Naive thymus-derived CD4-positive, alpha-beta T cell (primary cell): ENCODE measurements at regions of chrX and their contacts with region 1.

Region 1: DNA sequence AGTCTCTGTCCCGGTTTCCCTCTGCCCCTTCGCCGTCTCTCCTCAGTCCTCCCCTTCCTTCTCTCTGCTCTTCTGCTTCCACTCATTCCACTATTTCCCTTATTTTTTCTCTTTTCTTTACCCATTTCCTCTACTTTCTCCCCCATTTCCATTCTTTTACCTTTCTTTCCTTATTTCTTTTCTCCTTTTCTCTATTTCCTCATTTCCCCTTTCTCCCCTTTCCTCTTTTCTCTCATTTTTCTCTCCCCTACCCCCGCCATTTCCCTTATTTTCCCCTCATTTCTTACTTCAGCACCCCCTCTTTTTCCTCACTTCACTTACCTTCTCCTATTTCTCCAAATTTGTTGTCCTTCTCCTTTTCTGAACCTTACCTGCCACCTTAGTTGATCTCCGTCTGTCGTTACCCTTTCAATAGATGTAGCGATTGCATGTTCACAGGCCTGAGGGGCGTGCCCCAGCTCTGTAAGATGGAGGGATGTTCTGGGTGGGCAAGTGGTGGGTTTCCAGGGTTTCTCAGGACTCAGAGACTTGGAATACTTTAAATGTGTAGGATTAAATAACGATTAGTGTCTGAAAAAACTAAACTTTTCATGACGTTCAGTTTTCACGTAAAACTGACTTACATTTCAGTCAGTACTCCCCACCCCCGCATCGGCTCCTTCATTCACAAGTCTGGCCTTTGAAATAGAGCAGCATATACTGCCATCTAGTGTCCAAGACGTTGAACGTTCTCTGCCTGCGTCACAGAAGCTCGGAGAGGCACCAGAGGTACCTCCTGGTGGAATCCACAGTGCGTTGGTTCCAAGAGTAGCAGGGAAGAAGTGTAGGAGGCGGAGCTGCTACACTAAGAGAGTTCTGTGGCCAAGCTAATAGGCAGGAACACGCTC is 641 bp upstream of the NCBP2L start:
- DNase-seq: peak; percentile 13 to 87 (median 81)
- ATAC-seq: peak; percentile 91
- H3K4me3 ChIP-seq: peak overlapping the region; percentile 63
- H3K4me3 Mint-ChIP-seq: peak overlapping the region; percentile 80 to 96 (median 92)
- H3K27ac ChIP-seq: peak overlapping the region; percentile 64
- H3K27ac Mint-ChIP-seq: peak overlapping the region; percentile 82 to 95 (median 92)
- H3K4me1 ChIP-seq: no peaks in the 10 kb centered on the region
- H3K4me1 Mint-ChIP-seq: peaks cover 8 to 31% (median 19%) of the 10 kb centered on the region in 7 donors
- H3K27me3 ChIP-seq: no peaks in the 10 kb centered on the region
- H3K27me3 Mint-ChIP-seq: peaks cover 0 to 22% (median 0%) of the 10 kb centered on the region in 5 donors

Region 2: DNA sequence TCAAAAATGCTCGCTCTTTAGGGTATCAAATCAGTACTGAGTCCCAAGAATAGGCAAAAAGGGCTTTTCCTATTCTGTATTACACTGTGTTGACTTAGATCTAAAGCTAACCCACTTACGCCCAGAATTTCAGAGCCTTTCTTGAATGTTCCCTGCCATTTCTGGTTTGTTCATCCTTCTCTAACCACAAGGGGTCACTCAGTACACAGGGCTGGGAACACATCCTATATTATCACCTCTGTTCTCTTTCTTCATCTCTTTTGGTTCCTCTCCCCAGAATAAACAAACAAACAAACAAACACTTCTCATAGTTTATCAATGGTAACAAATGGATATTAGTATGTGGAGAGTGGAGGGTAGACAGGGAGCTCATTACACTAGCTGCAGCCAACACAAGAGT is 751.3 kb before region 1 on chrX:
- CTCF ChIA-PET with region 1: no interaction called
- POLR2A ChIA-PET with region 1: no interaction called
- intact Hi-C with region 1: loop called in 1 of 2 experiments (anchors 10 kb)
- DNase-seq: peak in 5 of 9 donors; percentile 0 to 23 (median 3)
- ATAC-seq: no peak
- H3K4me3 ChIP-seq: no peak overlapping the region
- H3K4me3 Mint-ChIP-seq: no peak overlapping the region
- H3K27ac ChIP-seq: no peak overlapping the region
- H3K27ac Mint-ChIP-seq: no peak overlapping the region
- H3K4me1 ChIP-seq: no peaks in the 10 kb centered on the region
- H3K4me1 Mint-ChIP-seq: peaks cover 0 to 1% (median 0%) of the 10 kb centered on the region in 7 donors
- H3K27me3 ChIP-seq: no peaks in the 10 kb centered on the region
- H3K27me3 Mint-ChIP-seq: peaks cover 0 to 4% (median 0%) of the 10 kb centered on the region in 5 donors

Region 3: GRCh38 chrX:107654872-107655761 is 121.8 kb before region 1 on chrX:
- CTCF ChIA-PET with region 1: interaction called, 96 read pairs
- POLR2A ChIA-PET with region 1: interaction called, 6 read pairs
- intact Hi-C with region 1: loop called (anchors 1 kb)
- DNase-seq: peak; percentile 49 to 76 (median 60)
- ATAC-seq: peak; percentile 94
- H3K4me3 ChIP-seq: no peak overlapping the region
- H3K4me3 Mint-ChIP-seq: no peak overlapping the region
- H3K27ac ChIP-seq: no peak overlapping the region
- H3K27ac Mint-ChIP-seq: peak overlapping the region in 7 of 9 donors; percentile 1 to 89 (median 72)
- H3K4me1 ChIP-seq: peaks cover 0 to 6% of the 10 kb centered on the region in 2 donors
- H3K4me1 Mint-ChIP-seq: peaks cover 6 to 30% (median 18%) of the 10 kb centered on the region in 7 donors
- H3K27me3 ChIP-seq: no peaks in the 10 kb centered on the region
- H3K27me3 Mint-ChIP-seq: no peaks in the 10 kb centered on the region

Region 4: DNA sequence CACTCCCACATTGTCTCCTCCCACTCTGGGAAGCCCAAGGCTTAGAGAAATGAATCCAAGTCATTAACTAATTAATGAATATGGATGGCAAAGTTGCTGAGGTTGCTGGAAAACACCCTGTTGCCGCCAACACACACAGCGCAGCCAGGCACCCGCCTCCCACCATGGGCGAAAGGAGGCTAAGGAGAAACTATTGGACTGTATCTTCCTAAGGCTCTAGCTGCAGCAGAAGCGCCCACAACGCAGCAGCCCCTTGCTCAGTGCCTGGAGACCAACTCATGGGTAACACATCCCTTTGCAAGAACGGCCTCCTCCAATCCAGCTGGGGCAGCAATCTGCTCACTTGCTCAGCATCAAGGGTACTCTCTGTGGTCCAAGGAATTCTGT is 35.5 kb before region 1 on chrX:
- CTCF ChIA-PET with region 1: interaction called, 21 read pairs
- POLR2A ChIA-PET with region 1: interaction called, 29 read pairs
- intact Hi-C with region 1: loop called (anchors 1 kb)
- DNase-seq: peak in 1 of 9 donors; percentile 10
- ATAC-seq: no peak
- H3K4me3 ChIP-seq: peak overlapping the region; percentile 45
- H3K4me3 Mint-ChIP-seq: peak overlapping the region; percentile 80 to 96 (median 85)
- H3K27ac ChIP-seq: peak overlapping the region; percentile 72
- H3K27ac Mint-ChIP-seq: peak overlapping the region; percentile 94 to 100 (median 99)
- H3K4me1 ChIP-seq: peaks cover 26 to 45% of the 10 kb centered on the region in 2 donors
- H3K4me1 Mint-ChIP-seq: peaks cover 15 to 70% (median 45%) of the 10 kb centered on the region in 7 donors
- H3K27me3 ChIP-seq: no peaks in the 10 kb centered on the region
- H3K27me3 Mint-ChIP-seq: peaks cover 0 to 7% (median 0%) of the 10 kb centered on the region in 5 donors

Region 5: DNA sequence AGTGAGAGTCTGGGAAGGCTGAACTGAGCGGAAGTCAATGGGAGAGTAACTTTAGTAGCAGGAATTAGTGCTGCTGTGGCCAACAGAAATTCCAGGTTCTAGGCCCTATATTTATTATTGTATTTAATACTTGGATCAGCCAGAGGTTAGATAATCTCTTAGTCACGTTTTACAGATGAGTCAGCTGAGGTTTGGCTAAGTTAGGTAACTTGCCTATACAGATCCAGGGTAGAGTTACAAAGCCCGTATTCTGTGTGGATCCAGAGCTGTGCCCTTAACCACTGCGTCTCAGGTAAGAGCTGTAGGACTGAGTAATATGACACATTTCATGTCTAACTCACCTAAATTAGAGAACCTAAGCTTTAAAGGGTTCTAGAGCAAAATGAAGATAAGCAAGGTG is 294.0 kb after region 1 on chrX:
- CTCF ChIA-PET with region 1: no interaction called
- POLR2A ChIA-PET with region 1: no interaction called
- intact Hi-C with region 1: loop called (anchors 1 to 5 kb)
- DNase-seq: no peak
- ATAC-seq: no peak
- H3K4me3 ChIP-seq: no peak overlapping the region
- H3K4me3 Mint-ChIP-seq: no peak overlapping the region
- H3K27ac ChIP-seq: no peak overlapping the region
- H3K27ac Mint-ChIP-seq: peak overlapping the region in 4 of 9 donors; percentile 22 to 78 (median 36)
- H3K4me1 ChIP-seq: no peaks in the 10 kb centered on the region
- H3K4me1 Mint-ChIP-seq: peaks cover 0 to 11% (median 1%) of the 10 kb centered on the region in 7 donors
- H3K27me3 ChIP-seq: no peaks in the 10 kb centered on the region
- H3K27me3 Mint-ChIP-seq: peaks cover 0 to 7% (median 0%) of the 10 kb centered on the region in 5 donors